BJ (cell line): ENCODE measurements at regions of chr10 and their contacts with region 1.

Region 1: DNA sequence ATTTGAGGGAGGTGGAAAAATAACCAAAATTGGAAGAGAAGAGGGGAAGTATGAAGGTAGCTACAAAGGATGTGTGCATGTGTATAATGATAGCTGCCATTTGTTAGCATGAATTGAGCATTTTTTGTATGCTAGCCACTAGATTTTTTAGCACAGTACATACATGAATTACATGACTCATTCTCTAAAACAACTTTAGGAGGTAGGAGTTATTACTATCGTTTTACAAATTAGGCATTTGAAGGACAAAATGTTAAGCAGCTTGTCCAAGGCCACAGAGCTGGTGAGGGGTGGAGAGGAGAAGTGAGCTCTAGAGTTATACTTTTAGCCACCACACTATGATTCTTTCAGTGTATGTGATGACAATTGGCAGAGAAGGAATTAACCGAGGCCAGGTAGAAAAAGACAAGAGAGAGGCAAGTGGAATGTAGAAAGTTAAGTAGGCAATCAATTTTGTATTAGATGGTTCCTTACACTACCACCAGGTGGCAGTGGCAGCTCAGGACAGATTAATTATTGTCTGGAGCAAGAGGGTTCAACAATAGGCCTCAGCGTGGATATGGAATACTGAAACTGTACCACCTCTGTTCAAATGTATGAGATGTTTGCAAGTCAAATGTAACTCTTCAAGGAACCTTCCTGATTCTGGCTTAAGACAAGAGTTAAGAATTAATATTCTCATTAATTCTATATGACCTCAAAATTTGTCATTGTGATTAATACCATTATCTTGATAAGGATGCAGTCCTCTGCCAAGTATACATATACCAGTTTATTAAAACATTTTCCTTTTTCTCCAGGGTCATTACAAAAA is 128.0 kb downstream of the MBL2 start:
- DNase-seq: no peak
- H3K4me3 ChIP-seq: no peak overlapping the region
- H3K27me3 ChIP-seq: no peaks in the 10 kb centered on the region
- CTCF ChIP-seq: peak; percentile 80

Region 2: DNA sequence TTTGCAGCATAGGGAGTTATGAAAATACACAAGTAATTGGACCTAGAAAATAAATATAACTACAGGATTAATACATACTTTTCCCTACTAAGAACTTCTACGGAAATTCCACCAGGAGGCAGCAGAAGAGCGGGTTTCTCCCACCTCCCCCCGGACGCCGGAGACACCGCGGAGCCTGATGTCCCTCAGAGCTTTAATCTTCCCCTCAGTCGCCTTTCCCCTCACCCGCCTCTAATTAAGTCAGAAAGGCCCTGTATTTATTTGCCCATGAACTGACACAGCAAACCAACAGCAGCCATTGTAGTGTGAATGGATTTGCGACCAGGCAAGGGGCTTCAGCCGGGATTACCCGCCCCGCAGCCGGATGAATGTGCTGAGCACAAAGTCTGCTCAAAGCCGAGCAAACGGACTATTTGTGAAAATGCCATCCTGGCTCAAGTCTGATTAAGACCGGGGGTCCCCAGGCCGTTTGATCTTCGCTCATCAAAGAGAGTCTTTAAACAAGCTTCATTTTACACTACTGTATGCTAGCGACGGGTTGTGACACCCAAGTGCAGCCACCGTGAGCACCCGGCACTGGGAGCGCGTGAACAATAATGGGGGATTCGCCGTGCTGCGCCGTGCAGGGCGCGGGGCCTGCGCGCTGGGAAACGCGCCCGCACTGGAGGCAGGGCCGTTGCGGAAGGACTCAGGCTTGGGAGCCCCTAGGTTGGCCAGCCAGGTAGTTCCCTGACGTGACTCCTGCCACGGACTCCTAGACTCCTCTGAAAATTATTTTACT is 336.1 kb before region 1 on chr10:
- CTCF ChIA-PET with region 1: interaction called, 23 read pairs
- POLR2A ChIA-PET with region 1: no interaction called
- DNase-seq: no peak
- H3K4me3 ChIP-seq: peak overlapping the region; percentile 28
- H3K27me3 ChIP-seq: no peaks in the 10 kb centered on the region
- CTCF ChIP-seq: peak; percentile 68

Region 3: GRCh38 chr10:52566471-52567246 is 77.9 kb before region 1 on chr10:
- CTCF ChIA-PET with region 1: interaction called, 11 read pairs
- POLR2A ChIA-PET with region 1: no interaction called
- DNase-seq: no peak
- H3K4me3 ChIP-seq: no peak overlapping the region
- H3K27me3 ChIP-seq: no peaks in the 10 kb centered on the region
- CTCF ChIP-seq: peak; percentile 58

Region 4: GRCh38 chr10:52677086-52677485 is 32.5 kb after region 1 on chr10:
- CTCF ChIA-PET with region 1: interaction called, 15 read pairs
- POLR2A ChIA-PET with region 1: no interaction called
- DNase-seq: peak; percentile 30
- H3K4me3 ChIP-seq: no peak overlapping the region
- H3K27me3 ChIP-seq: no peaks in the 10 kb centered on the region
- CTCF ChIP-seq: no peak

Region 5: DNA sequence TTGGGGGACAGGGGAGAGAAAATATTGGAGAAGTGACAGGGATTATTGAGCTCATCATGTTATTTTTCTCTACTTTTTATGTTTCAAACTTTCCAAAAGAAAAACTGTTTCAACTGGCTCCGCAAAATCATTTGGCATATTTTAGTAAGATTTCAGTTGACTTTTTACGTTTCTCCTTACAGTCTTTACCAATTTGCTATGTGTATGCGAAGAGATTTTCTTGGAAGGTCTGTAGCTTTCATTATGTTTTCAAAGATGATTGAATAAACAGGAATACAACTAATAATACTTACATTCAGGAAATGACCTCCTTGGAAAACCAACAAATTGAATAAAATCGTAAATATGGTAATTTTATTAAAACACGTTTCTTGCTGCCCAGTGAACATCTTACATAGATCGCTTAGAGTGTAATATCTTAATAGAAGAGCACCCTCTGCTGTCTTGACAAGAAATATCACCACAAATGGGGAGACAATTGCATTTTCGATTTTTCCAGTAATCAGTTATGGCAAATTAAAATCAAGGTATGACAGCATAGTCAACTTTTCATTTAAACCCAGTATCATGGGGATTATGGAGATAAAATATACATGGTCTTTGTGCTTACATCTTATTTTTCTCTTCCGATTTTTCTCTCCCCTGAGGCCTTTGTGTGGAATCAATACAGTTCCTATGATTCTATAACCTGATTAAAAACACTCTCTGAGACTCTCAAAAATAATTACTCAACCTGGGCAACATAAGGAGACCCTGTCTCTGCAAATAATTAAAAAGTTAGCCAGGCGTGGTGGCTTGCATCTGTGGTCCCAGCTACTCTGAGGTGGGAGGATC is 84.9 kb after region 1 on chr10:
- CTCF ChIA-PET with region 1: interaction called, 53 read pairs
- POLR2A ChIA-PET with region 1: no interaction called
- DNase-seq: peak; percentile 4
- H3K4me3 ChIP-seq: no peak overlapping the region
- H3K27me3 ChIP-seq: no peaks in the 10 kb centered on the region
- CTCF ChIP-seq: peak; percentile 49

Region 6: DNA sequence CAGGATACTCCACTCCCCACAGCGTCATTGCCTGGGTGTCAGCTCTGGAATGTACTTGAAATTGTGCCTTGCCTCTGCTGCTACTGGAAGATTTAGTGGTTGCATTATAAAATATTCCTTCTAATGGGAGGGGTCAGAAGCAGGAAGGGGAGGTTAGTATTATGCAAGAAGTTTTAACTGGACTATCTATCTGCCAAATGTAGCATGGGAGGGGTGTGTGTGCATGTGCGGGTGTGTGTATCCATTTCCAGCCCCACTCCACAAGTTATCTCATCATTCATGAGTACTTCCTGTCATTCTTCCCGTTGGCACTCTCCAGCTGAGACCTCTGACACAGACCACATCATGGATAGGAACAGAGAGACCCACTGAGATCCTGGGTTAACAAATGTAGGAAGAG is 114.6 kb after region 1 on chr10:
- CTCF ChIA-PET with region 1: no interaction called
- POLR2A ChIA-PET with region 1: no interaction called
- DNase-seq: no peak
- H3K4me3 ChIP-seq: no peak overlapping the region
- H3K27me3 ChIP-seq: no peaks in the 10 kb centered on the region
- CTCF ChIP-seq: no peak

Region 7: GRCh38 chr10:52779541-52780390 is 135.2 kb after region 1 on chr10:
- CTCF ChIA-PET with region 1: interaction called, 50 read pairs
- POLR2A ChIA-PET with region 1: no interaction called
- DNase-seq: no peak
- H3K4me3 ChIP-seq: no peak overlapping the region
- H3K27me3 ChIP-seq: peaks cover 1% of the 10 kb centered on the region; the same call in 1 of the 2 replicates
- CTCF ChIP-seq: peak; percentile 98